Activated CD4-positive, alpha-beta memory T cell treated with anti-CD3 and anti-CD28 coated beads for 36 hours (primary cell): ENCODE measurements at regions of chr4 and their contacts with region 1.

Region 1: DNA sequence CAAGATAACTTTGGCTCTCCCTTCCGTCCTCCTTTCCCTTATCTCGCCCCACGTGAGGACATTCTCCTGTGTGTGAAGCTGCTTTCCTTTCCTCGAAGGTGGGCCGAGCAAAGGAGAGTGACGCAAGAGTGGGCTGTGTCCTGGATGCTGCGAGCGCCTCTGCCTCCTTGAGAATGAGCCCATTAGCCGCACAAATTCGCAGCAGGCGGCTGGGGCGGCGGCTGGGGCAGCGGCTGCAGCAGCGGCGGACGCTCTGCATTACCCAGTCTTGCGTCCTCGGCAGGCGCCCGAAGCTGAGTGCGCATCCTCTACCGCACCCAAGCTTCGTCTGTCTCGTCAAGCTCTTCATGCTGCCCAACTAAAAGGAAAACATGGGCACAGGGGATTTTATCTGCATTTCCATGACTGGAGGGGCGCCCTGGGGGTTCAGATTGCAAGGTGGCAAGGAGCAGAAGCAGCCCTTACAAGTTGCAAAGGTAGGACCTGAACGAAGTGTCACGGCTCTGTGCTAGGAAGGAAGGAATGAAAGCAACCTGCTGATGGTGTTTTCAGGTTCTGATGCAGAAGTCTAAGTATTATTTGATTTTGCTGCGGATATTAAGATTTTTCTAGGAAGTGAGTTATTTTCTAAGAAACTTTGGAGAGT is at the start of gene SYNPO2:
- DNase-seq: peak; percentile 54
- H3K4me3 Mint-ChIP-seq: peak within 1 kb of the TSS; percentile 71
- H3K27ac Mint-ChIP-seq: no peak within 1 kb of the TSS
- H3K4me1 Mint-ChIP-seq: peaks cover 14% of the 10 kb centered on the region
- H3K27me3 Mint-ChIP-seq: peaks cover 21% of the 10 kb centered on the region
- total RNA-seq, gene SYNPO2: 0.12 to 0.19 TPM

Region 2: GRCh38 chr4:118740869-118741268 is 147.9 kb before region 1 on chr4:
- CTCF ChIA-PET with region 1: interaction called, 5 read pairs
- POLR2A ChIA-PET with region 1: no interaction called
- intact Hi-C with region 1: loop called (anchors 1 kb)
- DNase-seq: no peak
- H3K4me3 Mint-ChIP-seq: no peak overlapping the region
- H3K27ac Mint-ChIP-seq: no peak overlapping the region
- H3K4me1 Mint-ChIP-seq: no peaks in the 10 kb centered on the region
- H3K27me3 Mint-ChIP-seq: no peaks in the 10 kb centered on the region

Region 3: GRCh38 chr4:118981839-118982381 is 93.1 kb after region 1 on chr4:
- CTCF ChIA-PET with region 1: no interaction called
- POLR2A ChIA-PET with region 1: no interaction called
- intact Hi-C with region 1: no loop called
- DNase-seq: peak; percentile 55
- H3K4me3 Mint-ChIP-seq: no peak overlapping the region
- H3K27ac Mint-ChIP-seq: no peak overlapping the region
- H3K4me1 Mint-ChIP-seq: peaks cover 1% of the 10 kb centered on the region
- H3K27me3 Mint-ChIP-seq: peaks cover 2% of the 10 kb centered on the region